ENCODE measurements at regions of chr1 and their contacts with region 1.

Region 1: DNA sequence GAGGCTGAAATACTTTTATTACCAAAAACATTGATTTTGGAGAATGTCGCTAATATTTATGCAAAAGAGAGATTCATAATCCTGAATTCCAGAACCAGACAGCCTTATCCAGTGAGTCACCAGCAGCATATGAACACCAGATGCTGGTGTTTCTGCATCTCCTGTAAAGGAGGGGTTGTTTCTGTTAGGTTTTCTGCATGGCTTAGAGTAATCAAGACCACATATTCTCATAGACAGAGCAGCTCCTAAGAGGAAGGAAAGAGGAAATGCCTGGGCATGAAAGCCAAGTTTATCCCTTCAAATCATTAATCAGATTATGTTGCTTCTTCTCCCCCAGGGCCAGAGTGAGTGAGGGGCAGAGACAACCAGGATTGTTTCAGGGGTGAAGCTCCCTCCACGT is 86.2 kb downstream of the NGF start:
- DNase-seq: peak; percentile 96
- ATAC-seq: peak; percentile 98
- H3K4me3 ChIP-seq: no peak overlapping the region
- H3K27ac ChIP-seq: peak overlapping the region; percentile 82
- H3K4me1 ChIP-seq: peaks cover 2% of the 10 kb centered on the region
- H3K27me3 ChIP-seq: no peaks in the 10 kb centered on the region
- CTCF ChIP-seq: no peak
- POLR2A ChIP-seq: no peak
- RAD21 ChIP-seq: peak; percentile 25; the same call in 1 of the 2 replicates

Region 2: GRCh38 chr1:114986286-114986685 is 265.6 kb before region 1 on chr1:
- CTCF ChIA-PET with region 1: no interaction called
- POLR2A ChIA-PET with region 1: no interaction called
- dilution Hi-C with region 1: no loop called
- in situ Hi-C with region 1: no loop called
- intact Hi-C with region 1: no loop called
- DNase-seq: no peak
- ATAC-seq: no peak
- H3K4me3 ChIP-seq: no peak overlapping the region
- H3K27ac ChIP-seq: no peak overlapping the region
- H3K4me1 ChIP-seq: no peaks in the 10 kb centered on the region
- H3K27me3 ChIP-seq: no peaks in the 10 kb centered on the region
- CTCF ChIP-seq: no peak
- POLR2A ChIP-seq: no peak
- RAD21 ChIP-seq: no peak

Region 3: DNA sequence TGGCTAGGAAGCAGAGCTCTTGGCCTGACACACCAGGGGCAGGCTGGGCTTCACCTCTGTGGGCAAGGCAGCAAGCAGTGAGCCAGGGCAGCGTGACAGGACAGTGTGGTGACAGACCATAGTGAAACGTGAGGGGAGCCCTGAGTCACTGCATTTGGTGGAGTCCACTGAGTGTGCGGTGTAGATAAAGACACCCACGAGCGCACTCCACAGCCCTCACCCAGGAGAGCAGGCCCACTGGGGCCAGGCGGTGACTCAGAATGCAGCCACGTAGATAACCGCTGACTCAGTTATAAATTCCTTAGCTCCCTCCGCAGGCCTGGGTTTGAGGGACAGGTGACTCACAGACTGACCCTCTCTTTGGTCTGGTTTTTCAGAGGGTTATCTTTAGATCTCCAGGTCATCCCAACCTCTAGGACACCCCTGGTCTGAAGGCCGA is 72.4 kb before region 1 on chr1:
- CTCF ChIA-PET with region 1: no interaction called
- POLR2A ChIA-PET with region 1: interaction called, 6 read pairs
- dilution Hi-C with region 1: no loop called
- in situ Hi-C with region 1: no loop called
- intact Hi-C with region 1: loop called (anchors 2 kb)
- DNase-seq: peak; percentile 98
- ATAC-seq: peak; percentile 95
- H3K4me3 ChIP-seq: no peak overlapping the region
- H3K27ac ChIP-seq: peak overlapping the region; percentile 62
- H3K4me1 ChIP-seq: peaks cover 10% of the 10 kb centered on the region
- H3K27me3 ChIP-seq: no peaks in the 10 kb centered on the region
- CTCF ChIP-seq: 0 out of 2 replicates have a peak, but pooled peaks have one; percentile 6
- POLR2A ChIP-seq: 0 out of 2 replicates have a peak, but pooled peaks have one; percentile 14
- RAD21 ChIP-seq: peak; percentile 33

Region 4: GRCh38 chr1:115545791-115546733 is 294.2 kb after region 1 on chr1:
- CTCF ChIA-PET with region 1: no interaction called
- POLR2A ChIA-PET with region 1: no interaction called
- dilution Hi-C with region 1: no loop called
- in situ Hi-C with region 1: no loop called
- intact Hi-C with region 1: loop called (anchors 10 kb)
- DNase-seq: peak; percentile 95
- ATAC-seq: peak; percentile 93
- H3K4me3 ChIP-seq: no peak overlapping the region
- H3K27ac ChIP-seq: peak overlapping the region; percentile 80
- H3K4me1 ChIP-seq: peaks cover 15% of the 10 kb centered on the region
- H3K27me3 ChIP-seq: 0 out of 2 replicates have a peak, but pooled peaks cover 2% of the 10 kb centered on the region
- CTCF ChIP-seq: peak; percentile 75
- POLR2A ChIP-seq: peak; percentile 63; the same call in 1 of the 2 replicates
- RAD21 ChIP-seq: peak; percentile 71